ENCODE measurements at regions of chr4 and their contacts with region 1.

Region 1: GRCh38 chr4:154626793-154627484 is 14.5 kb upstream of the FGG start:
- DNase-seq: peak; percentile 69
- H3K4me3 ChIP-seq: no peak overlapping the region
- H3K27ac ChIP-seq: no peak overlapping the region
- H3K4me1 ChIP-seq: no peaks in the 10 kb centered on the region
- H3K27me3 ChIP-seq: no peaks in the 10 kb centered on the region
- CTCF ChIP-seq: peak; percentile 74

Region 2: DNA sequence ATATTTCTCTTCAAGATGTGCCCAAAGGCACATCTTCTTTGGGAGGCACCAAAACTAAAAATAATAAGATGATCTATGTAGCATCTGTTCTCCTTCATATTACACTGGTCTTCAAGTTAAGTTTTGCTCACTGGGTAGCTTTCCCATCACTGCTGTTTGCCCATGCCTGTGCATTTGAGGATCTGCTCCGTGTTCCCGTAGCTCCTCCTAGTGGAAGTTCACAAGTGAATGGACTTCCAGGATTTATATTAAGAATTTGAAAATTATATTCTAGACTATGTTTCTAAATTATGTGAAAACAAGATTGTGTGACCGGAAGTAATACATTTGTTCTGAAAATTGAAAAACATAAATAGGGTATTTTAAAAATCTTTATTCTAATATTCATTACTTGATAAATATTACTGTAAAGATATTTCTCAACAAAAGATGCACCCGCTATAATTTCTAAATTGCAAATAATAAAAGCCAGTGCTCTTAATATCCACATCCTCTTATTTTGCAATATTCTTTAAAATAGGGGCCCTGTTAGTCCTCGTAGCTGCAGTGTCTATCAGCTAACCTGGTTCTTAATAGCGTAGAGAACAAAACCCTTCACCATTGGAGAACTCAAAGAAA is 301.8 kb after region 1 on chr4:
- CTCF ChIA-PET with region 1: no interaction called
- POLR2A ChIA-PET with region 1: no interaction called
- intact Hi-C with region 1: loop called (anchors 5 kb)
- DNase-seq: peak; percentile 27
- H3K4me3 ChIP-seq: no peak overlapping the region
- H3K27ac ChIP-seq: no peak overlapping the region
- H3K4me1 ChIP-seq: no peaks in the 10 kb centered on the region
- H3K27me3 ChIP-seq: no peaks in the 10 kb centered on the region
- CTCF ChIP-seq: peak; percentile 54

Region 3: DNA sequence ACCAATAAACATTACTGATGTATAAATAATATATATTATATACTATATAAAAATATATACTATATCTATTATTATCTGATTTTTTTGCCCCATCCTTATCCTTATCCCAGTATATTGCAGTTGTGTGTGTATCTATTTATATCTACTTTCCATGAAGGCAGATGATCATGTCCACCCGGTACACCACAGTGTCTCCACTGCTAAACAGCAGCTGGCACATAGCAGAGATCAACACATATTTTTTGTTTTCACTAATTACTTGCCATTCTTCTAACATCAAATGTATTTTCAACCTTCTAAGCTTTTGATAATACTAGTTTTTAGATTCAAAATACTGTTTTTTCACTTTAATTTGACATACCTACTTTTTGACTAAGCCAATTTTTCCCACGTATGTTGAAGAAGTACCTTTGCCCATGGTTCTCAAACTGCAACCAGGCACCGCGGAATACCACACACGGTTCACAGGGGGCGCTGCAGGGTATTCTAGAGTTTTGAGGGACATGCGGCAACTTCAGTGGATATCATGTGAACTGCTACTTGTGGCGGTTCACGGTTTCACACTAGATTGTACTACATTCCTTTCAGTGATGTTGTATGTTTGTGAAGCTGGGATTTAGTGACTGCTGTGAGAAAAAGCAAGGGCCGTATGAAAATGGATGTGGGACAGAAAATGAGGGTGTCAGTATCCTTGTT is 399.0 kb after region 1 on chr4:
- CTCF ChIA-PET with region 1: no interaction called
- POLR2A ChIA-PET with region 1: no interaction called
- intact Hi-C with region 1: no loop called
- DNase-seq: peak; percentile 57
- H3K4me3 ChIP-seq: no peak overlapping the region
- H3K27ac ChIP-seq: no peak overlapping the region
- H3K4me1 ChIP-seq: no peaks in the 10 kb centered on the region
- H3K27me3 ChIP-seq: no peaks in the 10 kb centered on the region
- CTCF ChIP-seq: peak; percentile 57